CD4-positive, alpha-beta T cell (primary cell): ENCODE measurements at regions of chr6 and their contacts with region 1.

Region 1: GRCh38 chr6:26156076-26156849 is 69.0 kb downstream of the HFE start:
- DNase-seq: peak; percentile 76 to 94 (median 88)
- ATAC-seq: peak; percentile 33
- H3K4me3 ChIP-seq: peak overlapping the region; percentile 92
- H3K4me3 Mint-ChIP-seq: peak overlapping the region; percentile 99
- H3K27ac ChIP-seq: peak overlapping the region; percentile 67 to 91
- H3K27ac Mint-ChIP-seq: peak overlapping the region; percentile 97
- H3K4me1 ChIP-seq: peaks cover 37% of the 10 kb centered on the region
- H3K4me1 Mint-ChIP-seq: peaks cover 40% of the 10 kb centered on the region
- H3K27me3 ChIP-seq: no peaks in the 10 kb centered on the region
- H3K27me3 Mint-ChIP-seq: peaks cover 12% of the 10 kb centered on the region
- CTCF ChIP-seq: no peak

Region 2: DNA sequence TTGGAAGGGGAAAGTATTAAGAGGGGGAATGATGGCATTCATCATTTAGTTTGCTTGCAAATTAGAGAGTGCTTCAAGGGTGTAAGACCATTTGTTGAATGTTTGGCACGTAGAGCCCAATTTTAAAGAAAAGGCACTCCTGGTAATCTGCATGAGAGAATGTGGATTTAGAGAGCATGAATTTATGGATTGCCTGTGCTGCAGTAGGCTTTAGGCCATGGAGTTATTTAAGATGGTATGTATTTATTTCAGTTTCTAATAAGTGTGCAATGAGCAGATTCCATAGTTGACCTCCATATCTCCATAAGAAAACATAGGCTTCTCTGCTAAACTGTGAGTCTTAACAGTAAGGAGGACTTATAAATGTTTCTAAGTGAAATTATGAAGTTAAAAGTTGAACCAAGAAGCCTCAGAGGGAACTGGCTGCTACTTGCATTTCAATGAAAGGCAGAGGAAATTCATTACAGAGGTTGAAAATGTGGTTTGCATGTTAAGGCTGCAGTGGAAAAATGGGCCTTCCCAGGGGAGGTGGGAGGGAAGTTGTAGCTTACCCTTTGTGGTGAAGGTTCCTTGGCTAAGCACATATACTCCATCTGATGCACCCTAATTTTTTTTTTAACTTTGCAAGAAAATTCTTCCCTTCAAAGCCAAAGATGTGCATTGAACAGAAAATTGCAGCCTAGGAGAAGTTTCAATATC is 742.9 kb before region 1 on chr6:
- CTCF ChIA-PET with region 1: no interaction called
- POLR2A ChIA-PET with region 1: no interaction called
- intact Hi-C with region 1: no loop called
- DNase-seq: no peak
- ATAC-seq: no peak
- H3K4me3 ChIP-seq: no peak overlapping the region
- H3K4me3 Mint-ChIP-seq: no peak overlapping the region
- H3K27ac ChIP-seq: no peak overlapping the region
- H3K27ac Mint-ChIP-seq: peak overlapping the region; percentile 25
- H3K4me1 ChIP-seq: peaks cover 16% of the 10 kb centered on the region
- H3K4me1 Mint-ChIP-seq: peaks cover 55% of the 10 kb centered on the region
- H3K27me3 ChIP-seq: no peaks in the 10 kb centered on the region
- H3K27me3 Mint-ChIP-seq: no peaks in the 10 kb centered on the region
- CTCF ChIP-seq: no peak

Region 3: DNA sequence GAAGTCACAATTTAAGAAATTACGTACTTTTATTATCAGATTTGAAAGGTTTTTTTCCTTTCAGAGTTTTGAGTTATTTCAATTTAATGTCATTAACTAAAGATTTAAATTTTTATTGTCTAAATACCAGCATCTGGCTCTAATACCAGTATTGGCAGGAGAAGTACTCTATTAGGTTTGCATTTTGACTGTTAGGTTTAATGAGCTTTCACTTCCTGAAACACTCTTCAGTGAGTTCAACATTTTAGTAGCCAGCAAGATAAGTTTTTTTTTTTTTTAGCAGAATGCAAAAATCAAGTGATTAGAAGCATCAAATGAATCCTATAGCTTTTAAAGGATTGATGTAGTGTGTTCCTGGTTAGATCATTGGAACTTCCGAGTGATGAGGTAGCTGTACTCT is 538.3 kb before region 1 on chr6:
- CTCF ChIA-PET with region 1: no interaction called
- POLR2A ChIA-PET with region 1: no interaction called
- intact Hi-C with region 1: no loop called
- DNase-seq: no peak
- ATAC-seq: no peak
- H3K4me3 ChIP-seq: no peak overlapping the region
- H3K4me3 Mint-ChIP-seq: no peak overlapping the region
- H3K27ac ChIP-seq: no peak overlapping the region
- H3K27ac Mint-ChIP-seq: no peak overlapping the region
- H3K4me1 ChIP-seq: no peaks in the 10 kb centered on the region
- H3K4me1 Mint-ChIP-seq: no peaks in the 10 kb centered on the region
- H3K27me3 ChIP-seq: no peaks in the 10 kb centered on the region
- H3K27me3 Mint-ChIP-seq: no peaks in the 10 kb centered on the region
- CTCF ChIP-seq: no peak

Region 4: GRCh38 chr6:26045065-26045927 is 111.0 kb before region 1 on chr6:
- CTCF ChIA-PET with region 1: no interaction called
- POLR2A ChIA-PET with region 1: interaction called, 292 read pairs
- intact Hi-C with region 1: loop called in 1 of 2 experiments (anchors 1 kb)
- DNase-seq: peak; percentile 49 to 96 (median 74)
- ATAC-seq: peak; percentile 55
- H3K4me3 ChIP-seq: peak overlapping the region; percentile 70
- H3K4me3 Mint-ChIP-seq: peak overlapping the region; percentile 97
- H3K27ac ChIP-seq: peak overlapping the region; percentile 71 to 91
- H3K27ac Mint-ChIP-seq: peak overlapping the region; percentile 94
- H3K4me1 ChIP-seq: peaks cover 21% of the 10 kb centered on the region
- H3K4me1 Mint-ChIP-seq: peaks cover 28% of the 10 kb centered on the region
- H3K27me3 ChIP-seq: no peaks in the 10 kb centered on the region
- H3K27me3 Mint-ChIP-seq: no peaks in the 10 kb centered on the region
- CTCF ChIP-seq: no peak

Region 5: DNA sequence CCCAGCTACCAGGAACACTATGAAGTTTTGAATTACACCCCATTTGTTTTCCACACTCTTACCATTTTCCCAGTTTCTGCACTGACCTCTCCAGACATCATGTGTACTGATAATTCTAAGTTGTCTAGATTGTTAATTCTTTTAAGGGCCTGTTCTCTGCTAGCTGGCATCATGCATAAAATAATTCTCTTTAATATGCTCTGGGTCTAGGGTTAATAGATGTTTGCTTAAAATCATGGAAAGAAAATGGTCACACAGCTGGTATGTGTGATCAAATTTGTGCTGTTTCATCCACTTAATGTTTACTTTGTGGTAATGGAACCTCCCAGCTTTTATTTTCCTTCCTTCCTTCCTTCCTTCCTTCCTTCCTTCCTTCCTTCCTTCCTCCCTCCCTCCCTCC is 19.9 kb before region 1 on chr6:
- CTCF ChIA-PET with region 1: no interaction called
- POLR2A ChIA-PET with region 1: interaction called, 3,030 read pairs
- intact Hi-C with region 1: no loop called
- DNase-seq: no peak
- ATAC-seq: no peak
- H3K4me3 ChIP-seq: no peak overlapping the region
- H3K4me3 Mint-ChIP-seq: no peak overlapping the region
- H3K27ac ChIP-seq: no peak overlapping the region
- H3K27ac Mint-ChIP-seq: no peak overlapping the region
- H3K4me1 ChIP-seq: peaks cover under 1% of the 10 kb centered on the region
- H3K4me1 Mint-ChIP-seq: peaks cover 43% of the 10 kb centered on the region
- H3K27me3 ChIP-seq: no peaks in the 10 kb centered on the region
- H3K27me3 Mint-ChIP-seq: no peaks in the 10 kb centered on the region
- CTCF ChIP-seq: no peak

Region 6: GRCh38 chr6:26223650-26224546 is 67.6 kb after region 1 on chr6:
- CTCF ChIA-PET with region 1: no interaction called
- POLR2A ChIA-PET with region 1: interaction called, 76 read pairs
- intact Hi-C with region 1: no loop called
- DNase-seq: peak in 13 of 14 experiments; percentile 45 to 93 (median 60)
- ATAC-seq: peak; percentile 87
- H3K4me3 ChIP-seq: peak overlapping the region; percentile 68
- H3K4me3 Mint-ChIP-seq: no peak overlapping the region
- H3K27ac ChIP-seq: peak overlapping the region; percentile 72 to 82
- H3K27ac Mint-ChIP-seq: no peak overlapping the region
- H3K4me1 ChIP-seq: peaks cover 18% of the 10 kb centered on the region
- H3K4me1 Mint-ChIP-seq: peaks cover 5% of the 10 kb centered on the region
- H3K27me3 ChIP-seq: no peaks in the 10 kb centered on the region
- H3K27me3 Mint-ChIP-seq: no peaks in the 10 kb centered on the region
- CTCF ChIP-seq: no peak

Region 7: GRCh38 chr6:26473758-26474438 is 317.6 kb after region 1 on chr6:
- CTCF ChIA-PET with region 1: no interaction called
- POLR2A ChIA-PET with region 1: interaction called, 26 read pairs
- intact Hi-C with region 1: no loop called
- DNase-seq: peak; percentile 60 to 96 (median 76)
- ATAC-seq: peak; percentile 91
- H3K4me3 ChIP-seq: peak overlapping the region; percentile 56
- H3K4me3 Mint-ChIP-seq: peak overlapping the region; percentile 94
- H3K27ac ChIP-seq: peak overlapping the region; percentile 85 to 90
- H3K27ac Mint-ChIP-seq: peak overlapping the region; percentile 99
- H3K4me1 ChIP-seq: peaks cover 45% of the 10 kb centered on the region
- H3K4me1 Mint-ChIP-seq: peaks cover 64% of the 10 kb centered on the region
- H3K27me3 ChIP-seq: no peaks in the 10 kb centered on the region
- H3K27me3 Mint-ChIP-seq: no peaks in the 10 kb centered on the region
- CTCF ChIP-seq: no peak

Region 8: GRCh38 chr6:27809939-27810767 is 1653.9 kb after region 1 on chr6:
- CTCF ChIA-PET with region 1: no interaction called
- POLR2A ChIA-PET with region 1: interaction called, 96 read pairs
- intact Hi-C with region 1: no loop called
- DNase-seq: peak; percentile 63 to 98 (median 75)
- ATAC-seq: peak; percentile 61
- H3K4me3 ChIP-seq: peak overlapping the region; percentile 64
- H3K4me3 Mint-ChIP-seq: peak overlapping the region; percentile 95
- H3K27ac ChIP-seq: peak overlapping the region; percentile 69 to 81
- H3K27ac Mint-ChIP-seq: peak overlapping the region; percentile 96
- H3K4me1 ChIP-seq: peaks cover 39% of the 10 kb centered on the region
- H3K4me1 Mint-ChIP-seq: peaks cover 68% of the 10 kb centered on the region
- H3K27me3 ChIP-seq: no peaks in the 10 kb centered on the region
- H3K27me3 Mint-ChIP-seq: no peaks in the 10 kb centered on the region
- CTCF ChIP-seq: no peak